Panc1 (cell line): ENCODE measurements at regions of chr19 and their contacts with region 1.

Region 1: DNA sequence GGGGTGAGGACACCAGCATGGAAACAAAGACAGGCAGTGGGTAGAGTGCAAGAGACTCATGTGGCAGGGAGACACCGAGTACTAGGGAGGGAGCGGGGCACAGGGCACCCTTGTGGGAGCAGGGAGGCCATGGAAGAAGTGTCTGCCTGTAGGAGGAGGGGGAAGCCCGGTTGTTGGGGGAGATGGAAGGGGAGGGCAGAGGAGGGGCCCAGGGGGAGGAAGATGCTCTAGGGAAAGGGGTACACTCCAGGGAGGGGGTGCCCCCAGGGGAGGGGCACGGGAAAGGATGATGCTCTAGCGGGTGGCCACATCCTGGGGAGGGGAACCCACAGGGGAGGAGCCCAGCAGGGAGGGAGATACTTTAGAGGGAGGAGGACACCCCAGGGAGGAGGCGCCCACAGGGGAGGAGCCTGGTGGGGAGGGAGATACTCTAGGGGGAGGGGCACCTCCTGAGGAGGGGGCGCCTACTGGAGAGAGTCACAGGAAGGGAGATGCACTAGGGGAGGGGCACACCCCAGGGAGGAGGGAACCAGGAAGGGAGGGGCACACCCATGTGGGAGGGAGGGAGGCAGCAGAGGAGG is 24.9 kb downstream of the CPAMD8 start:
- DNase-seq: no peak
- ATAC-seq: no peak
- H3K4me3 ChIP-seq: no peak overlapping the region
- H3K27ac ChIP-seq: no peak overlapping the region
- H3K4me1 ChIP-seq: no peaks in the 10 kb centered on the region
- H3K27me3 ChIP-seq: no peaks in the 10 kb centered on the region
- CTCF ChIP-seq: no peak

Region 2: DNA sequence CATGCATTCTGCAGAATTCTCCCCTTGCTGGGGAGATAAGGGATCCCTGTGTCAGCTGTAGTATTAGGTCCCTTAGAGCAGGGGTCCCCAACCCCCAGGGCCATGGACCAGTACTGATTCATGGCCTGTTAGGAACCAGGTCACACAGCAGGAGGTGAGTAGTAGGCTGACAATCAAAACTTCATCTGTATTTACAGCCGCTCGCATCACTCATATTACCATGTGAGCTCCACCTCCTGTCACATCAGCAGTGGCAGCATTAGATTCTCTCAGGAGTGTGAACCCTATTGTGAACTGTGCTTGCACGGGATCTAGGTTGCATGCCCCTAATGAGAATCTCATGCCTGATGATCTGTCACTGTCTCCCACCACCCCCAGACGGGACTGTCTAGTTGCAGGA is 13.0 kb before region 1 on chr19:
- CTCF ChIA-PET with region 1: interaction called, 12 read pairs
- POLR2A ChIA-PET with region 1: no interaction called
- in situ Hi-C with region 1: no loop called
- intact Hi-C with region 1: no loop called
- DNase-seq: no peak
- ATAC-seq: no peak
- H3K4me3 ChIP-seq: no peak overlapping the region
- H3K27ac ChIP-seq: no peak overlapping the region
- H3K4me1 ChIP-seq: no peaks in the 10 kb centered on the region
- H3K27me3 ChIP-seq: no peaks in the 10 kb centered on the region
- CTCF ChIP-seq: no peak